Endothelial cell of umbilical vein (primary cell): ENCODE measurements at regions of chr4 and their contacts with region 1.

Region 1: GRCh38 chr4:114015444-114015899 is 36.0 kb upstream of the ARSJ start:
- DNase-seq: peak; percentile 99
- H3K4me3 ChIP-seq: no peak overlapping the region
- H3K27ac ChIP-seq: peak overlapping the region; percentile 96
- H3K4me1 ChIP-seq: peaks cover 36% of the 10 kb centered on the region
- H3K27me3 ChIP-seq: no peaks in the 10 kb centered on the region
- CTCF ChIP-seq: no peak
- POLR2A ChIP-seq: peak; percentile 74

Region 2: DNA sequence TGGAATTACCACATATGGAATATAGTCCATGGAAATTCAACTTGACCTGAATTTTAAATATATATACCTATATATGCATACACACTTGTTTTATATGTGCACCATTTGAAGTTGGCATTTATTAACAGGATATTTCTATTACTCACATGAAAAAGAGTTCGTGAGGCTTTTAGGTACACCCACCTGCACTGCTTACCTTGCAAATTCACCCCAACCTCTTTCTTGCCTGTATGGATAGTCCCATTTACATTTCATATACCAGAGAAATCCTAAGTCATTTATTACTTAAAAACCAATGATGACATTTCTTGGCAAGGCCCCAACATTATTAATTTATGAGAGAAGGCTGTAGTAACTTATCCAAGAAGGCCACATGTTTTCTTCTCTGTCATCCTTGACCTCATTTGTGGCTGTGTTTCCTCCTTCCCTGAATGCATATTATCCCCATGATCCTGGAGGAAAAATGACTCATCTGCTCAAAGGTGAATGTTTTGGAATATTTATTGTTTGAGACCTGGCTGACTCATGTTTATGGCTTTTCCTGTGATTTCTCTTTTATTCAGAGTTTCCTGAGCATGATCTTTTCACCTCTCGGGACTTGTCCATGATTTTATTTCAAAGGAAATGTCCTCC is 1932.4 kb before region 1 on chr4:
- CTCF ChIA-PET with region 1: no interaction called
- POLR2A ChIA-PET with region 1: no interaction called
- dilution Hi-C with region 1: no loop called
- intact Hi-C with region 1: loop called (anchors 10 kb)
- DNase-seq: peak; percentile 99
- H3K4me3 ChIP-seq: no peak overlapping the region
- H3K27ac ChIP-seq: peak overlapping the region; percentile 95
- H3K4me1 ChIP-seq: peaks cover 41% of the 10 kb centered on the region
- H3K27me3 ChIP-seq: no peaks in the 10 kb centered on the region
- CTCF ChIP-seq: no peak
- POLR2A ChIP-seq: peak; percentile 76

Region 3: DNA sequence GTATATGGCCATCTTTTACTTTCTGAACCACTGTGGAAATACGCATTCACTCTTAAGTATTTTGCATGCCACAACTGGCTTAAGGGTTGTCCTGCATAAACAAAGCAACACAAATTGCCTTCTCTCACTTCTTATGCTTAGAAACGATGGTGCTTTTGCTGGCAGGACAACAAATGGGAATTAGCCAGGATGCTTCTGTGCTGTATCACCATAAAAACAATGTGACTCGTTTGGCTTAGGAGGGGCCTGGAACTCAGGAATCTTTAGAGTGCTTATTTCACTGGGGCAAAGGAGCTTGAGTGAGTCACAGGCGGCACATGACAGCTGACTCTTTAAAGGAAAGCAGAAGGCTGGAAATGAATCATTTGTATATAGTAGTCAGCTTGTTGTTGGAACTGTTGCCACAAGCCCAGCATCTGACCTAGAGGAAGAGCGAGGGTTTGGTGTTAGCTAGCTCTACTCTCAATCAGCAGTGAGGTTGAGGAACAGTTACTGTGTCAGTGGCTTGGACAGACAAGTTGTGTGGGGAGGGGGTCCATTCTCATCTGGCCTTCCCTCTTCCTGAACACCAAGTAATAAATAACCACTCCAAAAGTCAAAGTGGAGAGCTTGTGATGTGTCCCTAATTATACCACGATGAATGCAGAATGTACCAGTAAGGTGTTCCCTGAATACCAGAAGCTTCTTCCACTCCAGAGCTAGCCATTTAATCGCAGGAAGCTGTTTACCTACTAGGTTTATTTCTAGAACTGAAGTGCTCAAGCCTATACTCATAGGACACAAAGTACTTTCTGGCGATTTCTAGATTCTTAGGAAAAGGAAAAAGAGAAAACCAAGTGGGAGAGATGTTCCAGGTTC is 547.1 kb before region 1 on chr4:
- CTCF ChIA-PET with region 1: no interaction called
- POLR2A ChIA-PET with region 1: interaction called, 3 read pairs
- dilution Hi-C with region 1: no loop called
- intact Hi-C with region 1: loop called (anchors 1 kb)
- DNase-seq: peak; percentile 100
- H3K4me3 ChIP-seq: peak overlapping the region in 1 of 3 experiments; percentile 7
- H3K27ac ChIP-seq: peak overlapping the region; percentile 96
- H3K4me1 ChIP-seq: peaks cover 31% of the 10 kb centered on the region
- H3K27me3 ChIP-seq: no peaks in the 10 kb centered on the region
- CTCF ChIP-seq: no peak
- POLR2A ChIP-seq: peak; percentile 40

Region 4: GRCh38 chr4:113781439-113782040 is 233.9 kb before region 1 on chr4:
- CTCF ChIA-PET with region 1: no interaction called
- POLR2A ChIA-PET with region 1: no interaction called
- dilution Hi-C with region 1: no loop called
- intact Hi-C with region 1: loop called (anchors 1 kb)
- DNase-seq: peak; percentile 58
- H3K4me3 ChIP-seq: no peak overlapping the region
- H3K27ac ChIP-seq: no peak overlapping the region
- H3K4me1 ChIP-seq: peaks cover 19% of the 10 kb centered on the region
- H3K27me3 ChIP-seq: no peaks in the 10 kb centered on the region
- CTCF ChIP-seq: peak; percentile 32 to 40
- POLR2A ChIP-seq: no peak

Region 5: GRCh38 chr4:113958766-113959538 is 56.5 kb before region 1 on chr4:
- CTCF ChIA-PET with region 1: interaction called, 11 read pairs
- POLR2A ChIA-PET with region 1: interaction called, 7 read pairs
- dilution Hi-C with region 1: no loop called
- intact Hi-C with region 1: loop called (anchors 1 kb)
- DNase-seq: peak; percentile 95
- H3K4me3 ChIP-seq: peak overlapping the region in 2 of 3 experiments; percentile 10 to 83
- H3K27ac ChIP-seq: peak overlapping the region; percentile 89
- H3K4me1 ChIP-seq: peaks cover 69% of the 10 kb centered on the region
- H3K27me3 ChIP-seq: no peaks in the 10 kb centered on the region
- CTCF ChIP-seq: no peak
- POLR2A ChIP-seq: peak; percentile 70

Region 6: GRCh38 chr4:114043116-114043515 is 27.6 kb after region 1 on chr4:
- CTCF ChIA-PET with region 1: no interaction called
- POLR2A ChIA-PET with region 1: no interaction called
- dilution Hi-C with region 1: no loop called
- intact Hi-C with region 1: loop called (anchors 1 kb)
- DNase-seq: peak; percentile 90
- H3K4me3 ChIP-seq: no peak overlapping the region
- H3K27ac ChIP-seq: no peak overlapping the region
- H3K4me1 ChIP-seq: peaks cover 10% of the 10 kb centered on the region
- H3K27me3 ChIP-seq: no peaks in the 10 kb centered on the region
- CTCF ChIP-seq: no peak
- POLR2A ChIP-seq: no peak

Region 7: GRCh38 chr4:114077610-114078009 is 62.1 kb after region 1 on chr4:
- CTCF ChIA-PET with region 1: interaction called, 3 read pairs
- POLR2A ChIA-PET with region 1: no interaction called
- dilution Hi-C with region 1: no loop called
- intact Hi-C with region 1: loop called (anchors 1 kb)
- DNase-seq: peak; percentile 92
- H3K4me3 ChIP-seq: no peak overlapping the region
- H3K27ac ChIP-seq: peak overlapping the region; percentile 58
- H3K4me1 ChIP-seq: peaks cover 13% of the 10 kb centered on the region
- H3K27me3 ChIP-seq: no peaks in the 10 kb centered on the region
- CTCF ChIP-seq: no peak
- POLR2A ChIP-seq: no peak